ENCODE measurements at regions of chr11 and their contacts with region 1.

Region 1: DNA sequence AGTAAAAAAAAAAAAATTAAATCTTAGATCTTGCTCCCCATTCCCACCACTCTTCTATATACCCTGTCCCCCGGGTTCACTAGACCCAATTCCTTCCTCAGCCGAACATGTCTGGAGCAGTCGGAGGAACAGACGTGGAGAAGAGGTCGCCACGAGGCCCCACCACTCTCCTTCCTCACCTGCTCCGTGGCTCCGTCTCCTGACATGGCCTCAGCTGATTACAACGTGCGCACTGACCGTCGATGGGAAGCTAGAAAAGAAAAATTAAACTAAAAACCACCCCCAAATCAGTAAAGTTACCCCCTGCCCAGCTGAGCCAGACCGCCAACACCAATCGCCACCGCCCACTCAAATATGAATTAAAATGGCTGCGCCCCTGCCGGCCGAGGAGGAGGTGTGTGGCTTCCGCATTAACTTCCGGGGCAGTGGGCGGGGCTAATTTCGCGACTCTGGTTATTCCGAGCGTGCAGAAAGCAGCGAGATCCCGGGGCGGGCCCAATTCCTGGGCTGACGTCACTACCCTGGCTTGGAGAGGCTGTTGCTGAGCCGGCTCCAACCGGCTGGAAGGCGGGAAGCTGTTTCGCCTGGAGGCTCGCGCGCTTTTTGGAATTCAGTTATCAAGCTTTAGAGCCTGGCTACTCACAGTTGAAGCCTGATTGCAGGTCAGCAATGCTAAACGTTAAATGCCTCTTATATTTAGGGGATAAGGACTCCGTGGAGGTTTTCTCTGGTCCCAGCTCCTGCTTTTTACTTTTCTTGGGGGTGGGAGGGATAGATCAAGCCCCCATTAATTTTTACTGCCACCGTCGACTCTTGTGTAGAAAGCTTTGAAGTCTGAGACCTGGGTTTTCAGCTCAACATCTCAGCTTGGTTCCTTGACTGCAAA is at the start of gene CSTF3:
- DNase-seq: peak; percentile 95 to 100 (median 95)
- ATAC-seq: peak; percentile 91
- H3K4me3 ChIP-seq: peak within 1 kb of the TSS; percentile 73
- H3K27ac ChIP-seq: peak within 1 kb of the TSS; percentile 96
- H3K4me1 ChIP-seq: peaks cover 15 to 18% of the 10 kb centered on the region in 2 experiments
- H3K27me3 ChIP-seq: no peaks in the 10 kb centered on the region
- CTCF ChIP-seq: peak in 2 of 3 experiments; percentile 25 to 41; a peak in 2 of 6 replicates
- EP300 ChIP-seq: peak; percentile 82
- POLR2A ChIP-seq: peak; percentile 96
- RAD21 ChIP-seq: no peak
- polyA plus RNA-seq, gene CSTF3: 71.1 to 83.3 TPM

Region 2: DNA sequence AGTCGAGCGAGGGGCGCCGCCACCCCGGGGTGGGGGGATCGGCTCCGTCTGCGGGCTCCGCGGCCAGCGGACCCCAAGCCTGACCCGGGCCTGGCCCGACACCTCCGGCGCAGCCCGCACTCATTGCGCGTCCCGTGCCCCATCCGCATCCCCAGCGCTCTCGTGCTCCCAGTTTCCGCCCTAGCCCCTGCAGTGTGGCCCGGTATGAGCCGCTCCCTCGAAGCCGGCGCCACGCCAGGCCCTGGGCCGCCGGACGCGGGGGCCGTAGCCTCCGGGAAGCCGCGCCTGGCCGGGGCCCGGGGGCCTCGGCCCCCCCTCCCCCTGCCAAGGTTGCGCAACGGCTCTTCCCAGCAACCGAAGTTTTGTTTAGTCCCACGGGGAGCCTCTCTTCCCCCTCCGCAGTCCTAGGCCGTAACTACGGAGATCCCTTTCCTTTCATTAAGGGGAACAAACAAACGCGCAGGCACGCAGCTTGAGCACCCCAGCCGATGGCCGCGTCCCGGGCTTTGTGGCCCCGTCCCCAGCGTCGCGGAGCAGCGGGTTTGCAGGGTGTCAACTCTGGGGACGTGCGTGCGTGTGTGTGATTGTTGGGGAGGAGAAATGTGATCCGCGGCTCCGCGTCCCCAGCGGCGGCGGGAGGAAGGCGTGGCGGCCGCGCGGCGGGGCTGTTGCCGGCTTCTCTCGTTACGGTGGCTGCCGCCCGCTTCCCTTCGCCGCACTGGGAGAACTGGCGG is 96.7 kb after region 1 on chr11:
- CTCF ChIA-PET with region 1: interaction called, 6 read pairs
- POLR2A ChIA-PET with region 1: no interaction called
- in situ Hi-C with region 1: no loop called
- intact Hi-C with region 1: loop called (anchors 2 kb)
- DNase-seq: peak; percentile 73 to 87 (median 78)
- ATAC-seq: peak; percentile 77
- H3K4me3 ChIP-seq: peak overlapping the region; percentile 96
- H3K27ac ChIP-seq: peak overlapping the region; percentile 94
- H3K4me1 ChIP-seq: peaks cover 8 to 18% of the 10 kb centered on the region in 2 experiments
- H3K27me3 ChIP-seq: no peaks in the 10 kb centered on the region
- CTCF ChIP-seq: peak; percentile 15 to 46 (median 23); a peak in 3 of 6 replicates
- EP300 ChIP-seq: no peak
- POLR2A ChIP-seq: peak; percentile 78
- RAD21 ChIP-seq: 0 out of 4 replicates have a peak, but pooled peaks of 1 of the 2 experiments have one; percentile 18

Region 3: DNA sequence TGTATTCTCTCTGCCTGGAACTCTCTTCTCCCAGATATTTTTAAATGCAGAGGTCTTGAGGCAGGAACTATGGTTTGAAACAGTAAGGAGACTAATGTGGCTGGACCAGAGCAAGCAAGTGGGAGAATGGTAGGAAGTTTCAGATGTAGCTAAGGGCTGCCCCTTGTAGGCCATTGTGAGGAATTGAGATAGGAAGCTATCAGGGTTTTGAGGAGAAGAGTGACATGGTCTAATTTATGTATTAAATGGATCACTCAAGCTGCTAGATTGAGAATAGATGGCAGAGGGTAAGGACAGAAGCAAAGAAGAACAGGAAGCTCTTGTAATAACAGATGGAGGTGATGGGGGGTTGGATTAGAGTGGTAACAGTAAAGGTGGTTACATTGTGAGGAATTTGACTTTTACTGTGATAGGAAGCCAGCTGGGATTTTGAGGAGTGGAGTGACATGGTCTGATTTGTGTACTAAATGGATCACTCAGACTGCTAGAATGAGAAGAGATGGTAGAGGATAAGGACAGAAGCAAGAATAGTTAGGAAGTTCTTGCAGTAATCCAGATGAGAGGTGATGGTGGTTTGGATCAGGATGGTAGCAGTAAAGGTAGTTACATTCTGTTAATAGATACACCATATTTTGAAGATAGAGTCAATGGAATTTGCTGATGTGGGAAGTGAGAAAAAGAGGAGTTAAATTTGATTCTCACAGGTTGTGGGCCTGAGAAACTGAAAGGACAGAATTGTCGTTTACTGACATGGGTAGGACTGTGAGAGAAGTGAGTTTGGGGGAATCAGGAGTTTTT is 158.9 kb after region 1 on chr11:
- CTCF ChIA-PET with region 1: interaction called, 4 read pairs
- POLR2A ChIA-PET with region 1: no interaction called
- in situ Hi-C with region 1: loop called (anchors 5 kb)
- intact Hi-C with region 1: loop called (anchors 2 kb)
- DNase-seq: peak in 1 of 4 experiments; percentile 30
- ATAC-seq: peak; percentile 74
- H3K4me3 ChIP-seq: no peak overlapping the region
- H3K27ac ChIP-seq: no peak overlapping the region
- H3K4me1 ChIP-seq: peaks cover 5 to 14% of the 10 kb centered on the region in 2 experiments; a peak in 4 of 5 replicates
- H3K27me3 ChIP-seq: no peaks in the 10 kb centered on the region
- CTCF ChIP-seq: peak; percentile 6 to 44 (median 26); a peak in 3 of 6 replicates
- EP300 ChIP-seq: no peak
- POLR2A ChIP-seq: no peak
- RAD21 ChIP-seq: peak; percentile 29 to 56; a peak in 3 of 4 replicates

Region 4: DNA sequence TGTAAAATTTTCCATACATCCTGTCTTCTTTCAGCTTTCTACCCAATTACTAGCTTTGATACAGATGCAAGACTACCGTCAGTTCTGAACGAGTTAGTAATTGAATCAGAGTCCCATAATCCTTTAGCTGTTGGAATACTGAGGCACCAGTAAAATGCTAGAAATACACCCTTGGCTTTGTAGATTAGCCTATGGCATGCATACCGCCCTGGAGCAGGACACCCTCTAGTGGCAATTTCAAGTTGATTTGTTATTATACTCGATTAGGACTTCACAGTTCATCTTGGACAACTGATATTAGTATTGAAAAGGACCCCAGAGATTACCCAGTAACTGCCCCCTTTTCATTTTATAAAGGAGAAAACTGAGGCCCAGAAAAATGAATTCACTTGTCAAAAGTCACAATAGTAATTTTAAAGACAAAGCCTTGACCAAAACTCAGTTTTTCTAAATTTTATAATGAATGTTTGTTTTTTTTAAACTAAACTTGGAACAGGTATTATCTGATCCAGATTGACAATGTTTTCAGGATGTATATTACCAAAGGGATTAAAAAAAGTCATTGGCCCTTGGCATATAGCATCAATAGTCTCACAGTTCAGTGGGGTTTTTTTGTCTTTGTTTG is 168.5 kb after region 1 on chr11:
- CTCF ChIA-PET with region 1: interaction called, 27 read pairs
- POLR2A ChIA-PET with region 1: interaction called, 7 read pairs
- in situ Hi-C with region 1: loop called (anchors 5 kb)
- intact Hi-C with region 1: loop called (anchors 1 kb)
- DNase-seq: peak; percentile 26 to 74 (median 40)
- ATAC-seq: peak; percentile 96
- H3K4me3 ChIP-seq: no peak overlapping the region
- H3K27ac ChIP-seq: no peak overlapping the region
- H3K4me1 ChIP-seq: no peaks in the 10 kb centered on the region
- H3K27me3 ChIP-seq: no peaks in the 10 kb centered on the region
- CTCF ChIP-seq: peak; percentile 68 to 85 (median 72)
- EP300 ChIP-seq: no peak
- POLR2A ChIP-seq: no peak
- RAD21 ChIP-seq: peak; percentile 75 to 88

Region 5: DNA sequence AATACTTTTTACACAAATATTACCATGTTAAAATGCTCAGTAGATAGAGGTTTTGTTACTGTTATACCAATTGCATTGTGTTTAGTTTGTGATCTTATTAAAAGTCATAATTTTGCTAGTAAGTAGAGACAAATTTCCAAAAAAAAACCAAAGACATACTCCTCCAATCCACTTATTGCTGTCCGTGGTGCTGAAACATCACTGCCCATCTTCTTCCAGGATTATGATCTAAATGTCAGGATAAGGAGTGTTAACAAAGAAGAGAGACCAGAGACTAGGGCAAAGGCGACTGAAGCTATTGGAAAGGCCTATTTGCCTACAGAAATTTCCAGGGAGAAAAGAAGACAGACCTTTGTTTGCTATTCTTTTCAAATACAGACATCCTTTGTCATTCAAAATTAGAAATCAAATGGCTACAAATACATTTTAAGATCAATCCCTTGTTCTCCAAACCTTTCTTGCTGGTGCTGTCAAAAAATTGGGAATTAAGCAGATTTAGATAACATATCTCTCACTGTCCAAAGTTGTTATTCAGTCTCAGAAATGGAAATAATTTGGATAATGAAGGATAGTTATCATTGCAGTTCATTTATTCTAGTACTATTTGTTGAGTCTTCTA is 339.6 kb after region 1 on chr11:
- CTCF ChIA-PET with region 1: no interaction called
- POLR2A ChIA-PET with region 1: no interaction called
- in situ Hi-C with region 1: no loop called
- intact Hi-C with region 1: no loop called
- DNase-seq: peak in 3 of 4 experiments; percentile 22 to 33 (median 24)
- ATAC-seq: no peak
- H3K4me3 ChIP-seq: no peak overlapping the region
- H3K27ac ChIP-seq: no peak overlapping the region
- H3K4me1 ChIP-seq: no peaks in the 10 kb centered on the region
- H3K27me3 ChIP-seq: no peaks in the 10 kb centered on the region
- CTCF ChIP-seq: no peak
- EP300 ChIP-seq: no peak
- POLR2A ChIP-seq: no peak
- RAD21 ChIP-seq: no peak

Region 6: GRCh38 chr11:33687733-33688479 is 526.5 kb after region 1 on chr11:
- CTCF ChIA-PET with region 1: interaction called, 4 read pairs
- POLR2A ChIA-PET with region 1: no interaction called
- in situ Hi-C with region 1: no loop called
- intact Hi-C with region 1: loop called (anchors 2 kb)
- DNase-seq: peak; percentile 40 to 72 (median 59)
- ATAC-seq: peak; percentile 80
- H3K4me3 ChIP-seq: no peak overlapping the region
- H3K27ac ChIP-seq: no peak overlapping the region
- H3K4me1 ChIP-seq: peaks cover 5 to 10% of the 10 kb centered on the region in 2 experiments; a peak in 4 of 5 replicates
- H3K27me3 ChIP-seq: peaks cover 3 to 18% of the 10 kb centered on the region in 2 experiments; a peak in 4 of 5 replicates
- CTCF ChIP-seq: peak; percentile 77 to 89 (median 79)
- EP300 ChIP-seq: no peak
- POLR2A ChIP-seq: no peak
- RAD21 ChIP-seq: peak; percentile 70 to 94

Region 7: DNA sequence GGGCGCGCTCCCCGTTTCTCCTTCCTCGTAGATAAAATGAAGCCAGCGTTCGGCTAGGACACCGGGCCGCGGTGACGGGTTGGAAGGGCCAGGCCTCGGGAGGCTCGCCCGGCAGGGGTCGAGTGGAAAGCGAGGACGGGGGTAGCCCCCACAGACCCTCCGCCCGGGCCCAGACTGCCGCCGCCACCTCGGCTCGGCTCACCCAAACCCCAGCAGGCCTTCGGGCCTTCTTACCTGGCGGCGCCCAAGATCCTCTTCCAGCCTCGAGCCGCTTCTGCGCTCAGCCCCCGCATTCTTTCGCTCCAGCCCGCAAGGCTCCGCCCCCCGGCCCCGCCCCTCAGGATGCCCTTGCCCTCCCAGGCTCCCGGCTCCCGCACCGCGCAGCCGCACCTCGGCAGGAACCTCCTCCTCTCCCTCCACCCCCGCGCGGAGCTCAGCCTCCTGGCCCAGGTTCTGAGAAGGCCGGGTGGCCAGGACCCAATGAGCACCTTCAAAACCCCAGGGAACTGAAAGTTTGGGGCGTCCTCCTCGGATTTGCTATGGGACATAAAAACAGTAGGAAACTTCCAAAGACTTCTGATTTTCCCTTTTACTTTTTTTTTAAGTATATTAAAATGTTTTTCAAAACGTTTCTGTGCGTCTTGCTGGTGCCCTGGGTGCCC is 574.9 kb after region 1 on chr11 and contains the start of gene CD59:
- CTCF ChIA-PET with region 1: no interaction called
- POLR2A ChIA-PET with region 1: no interaction called
- in situ Hi-C with region 1: no loop called
- intact Hi-C with region 1: loop called (anchors 2 kb)
- DNase-seq: peak; percentile 96 to 98 (median 96)
- ATAC-seq: peak; percentile 87
- H3K4me3 ChIP-seq: peak within 1 kb of the TSS; percentile 79
- H3K27ac ChIP-seq: peak within 1 kb of the TSS; percentile 90
- H3K4me1 ChIP-seq: peaks cover 16 to 53% of the 10 kb centered on the region in 2 experiments; a peak in 4 of 5 replicates
- H3K27me3 ChIP-seq: no peaks in the 10 kb centered on the region
- CTCF ChIP-seq: no peak
- EP300 ChIP-seq: no peak
- POLR2A ChIP-seq: peak; percentile 87
- RAD21 ChIP-seq: no peak
- polyA plus RNA-seq, gene CD59: 283 to 287 TPM